PC-3 (cell line): ENCODE measurements at regions of chr17 and their contacts with region 1.

Region 1: GRCh38 chr17:14300575-14301278 is at the start of gene HS3ST3B1:
- DNase-seq: peak; percentile 99
- ATAC-seq: peak; percentile 80
- H3K4me3 ChIP-seq: peak within 1 kb of the TSS; percentile 65
- H3K27ac ChIP-seq: no peak within 1 kb of the TSS
- H3K4me1 ChIP-seq: peaks cover 43% of the 10 kb centered on the region
- H3K27me3 ChIP-seq: peaks cover 93% of the 10 kb centered on the region
- CTCF ChIP-seq: no peak
- total RNA-seq, gene HS3ST3B1: 0.33 and 0.52 TPM in 2 replicates

Region 2: DNA sequence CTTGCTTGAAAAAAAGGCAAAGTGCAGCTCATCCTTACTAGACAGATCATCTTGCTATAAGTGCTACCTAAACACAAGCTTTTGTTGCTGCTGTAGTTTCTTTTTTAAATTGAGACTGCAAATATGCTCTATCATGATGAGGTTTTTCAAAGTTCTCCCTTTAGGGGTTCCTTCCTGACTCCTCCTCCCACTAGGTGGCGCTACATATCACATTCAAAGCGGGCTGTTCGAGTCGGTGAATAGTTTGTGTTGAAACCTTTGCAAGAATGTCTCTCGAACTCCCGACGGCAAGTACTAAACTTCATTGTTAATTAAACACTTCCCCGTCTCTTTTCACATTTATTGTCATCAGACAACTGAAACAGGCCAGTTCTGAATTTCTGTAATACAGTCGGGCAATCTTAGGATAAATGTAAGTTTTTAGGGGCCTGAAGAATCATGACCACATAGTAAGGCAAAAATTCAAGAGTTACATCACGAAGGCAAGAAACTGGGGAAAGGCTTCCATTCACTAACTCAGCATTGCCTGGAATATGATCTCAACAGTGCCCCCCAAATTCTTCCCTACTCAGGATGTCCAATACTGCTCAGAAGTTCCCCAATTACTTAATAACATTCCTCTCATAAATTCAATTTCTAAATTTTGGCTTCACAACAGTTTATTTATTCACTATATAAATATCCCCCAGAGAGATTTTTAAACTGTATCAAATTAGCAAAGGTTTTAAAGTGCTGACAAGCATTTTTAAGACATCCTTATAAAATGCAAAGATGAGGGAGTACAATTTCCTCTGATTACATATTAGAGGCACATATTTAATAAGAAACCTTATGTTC is 705.7 kb before region 1 on chr17:
- CTCF ChIA-PET with region 1: no interaction called
- POLR2A ChIA-PET with region 1: no interaction called
- intact Hi-C with region 1: loop called (anchors 1 kb)
- DNase-seq: peak; percentile 92
- ATAC-seq: peak; percentile 35; the same call in 1 of the 2 replicates
- H3K4me3 ChIP-seq: peak overlapping the region; percentile 44
- H3K27ac ChIP-seq: no peak overlapping the region
- H3K4me1 ChIP-seq: peaks cover 37% of the 10 kb centered on the region
- H3K27me3 ChIP-seq: 0 out of 2 replicates have a peak, but pooled peaks cover 5% of the 10 kb centered on the region
- CTCF ChIP-seq: peak; percentile 98

Region 3: GRCh38 chr17:14289162-14289561 is 11.6 kb before region 1 on chr17:
- CTCF ChIA-PET with region 1: no interaction called
- POLR2A ChIA-PET with region 1: no interaction called
- intact Hi-C with region 1: no loop called
- DNase-seq: peak; percentile 19
- ATAC-seq: no peak
- H3K4me3 ChIP-seq: no peak overlapping the region
- H3K27ac ChIP-seq: no peak overlapping the region
- H3K4me1 ChIP-seq: no peaks in the 10 kb centered on the region
- H3K27me3 ChIP-seq: peaks cover 59% of the 10 kb centered on the region
- CTCF ChIP-seq: no peak

Region 4: GRCh38 chr17:14341866-14342265 is 41.1 kb after region 1 on chr17:
- CTCF ChIA-PET with region 1: no interaction called
- POLR2A ChIA-PET with region 1: no interaction called
- intact Hi-C with region 1: no loop called
- DNase-seq: no peak
- ATAC-seq: no peak
- H3K4me3 ChIP-seq: no peak overlapping the region
- H3K27ac ChIP-seq: no peak overlapping the region
- H3K4me1 ChIP-seq: no peaks in the 10 kb centered on the region
- H3K27me3 ChIP-seq: peaks cover 42% of the 10 kb centered on the region
- CTCF ChIP-seq: no peak

Region 5: DNA sequence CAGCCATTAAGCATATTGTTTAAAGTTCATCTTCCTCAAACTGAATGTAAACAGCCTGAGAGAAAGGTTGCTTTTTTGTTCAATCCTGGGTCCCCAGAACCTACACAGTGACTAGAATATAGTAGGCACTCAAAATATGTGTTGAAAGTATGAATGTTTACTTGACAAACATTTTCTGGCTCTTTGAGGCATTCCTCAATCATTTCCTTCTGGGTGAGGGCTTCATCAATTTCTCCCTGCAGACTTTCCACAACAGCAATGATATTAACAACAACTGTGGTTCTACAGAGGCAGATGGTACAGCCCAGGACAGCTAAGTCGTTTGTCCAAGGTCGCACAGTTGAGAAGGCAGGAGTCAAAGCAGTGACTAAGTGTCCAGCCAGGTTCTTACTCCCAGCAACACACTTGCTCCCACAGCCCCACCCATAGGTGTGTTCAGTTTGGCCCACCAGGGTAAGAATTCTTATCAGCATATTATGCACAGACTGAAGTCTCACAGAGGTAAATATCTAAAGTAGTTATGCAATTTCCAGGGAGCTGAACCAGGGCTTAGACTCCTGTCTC is 61.3 kb after region 1 on chr17:
- CTCF ChIA-PET with region 1: no interaction called
- POLR2A ChIA-PET with region 1: no interaction called
- intact Hi-C with region 1: no loop called
- DNase-seq: no peak
- ATAC-seq: no peak
- H3K4me3 ChIP-seq: no peak overlapping the region
- H3K27ac ChIP-seq: no peak overlapping the region
- H3K4me1 ChIP-seq: no peaks in the 10 kb centered on the region
- H3K27me3 ChIP-seq: peaks cover 12% of the 10 kb centered on the region; the same call in 1 of the 2 replicates
- CTCF ChIP-seq: no peak